HEK293 (cell line): ENCODE measurements at regions of chr12 and their contacts with region 1.

Region 1: DNA sequence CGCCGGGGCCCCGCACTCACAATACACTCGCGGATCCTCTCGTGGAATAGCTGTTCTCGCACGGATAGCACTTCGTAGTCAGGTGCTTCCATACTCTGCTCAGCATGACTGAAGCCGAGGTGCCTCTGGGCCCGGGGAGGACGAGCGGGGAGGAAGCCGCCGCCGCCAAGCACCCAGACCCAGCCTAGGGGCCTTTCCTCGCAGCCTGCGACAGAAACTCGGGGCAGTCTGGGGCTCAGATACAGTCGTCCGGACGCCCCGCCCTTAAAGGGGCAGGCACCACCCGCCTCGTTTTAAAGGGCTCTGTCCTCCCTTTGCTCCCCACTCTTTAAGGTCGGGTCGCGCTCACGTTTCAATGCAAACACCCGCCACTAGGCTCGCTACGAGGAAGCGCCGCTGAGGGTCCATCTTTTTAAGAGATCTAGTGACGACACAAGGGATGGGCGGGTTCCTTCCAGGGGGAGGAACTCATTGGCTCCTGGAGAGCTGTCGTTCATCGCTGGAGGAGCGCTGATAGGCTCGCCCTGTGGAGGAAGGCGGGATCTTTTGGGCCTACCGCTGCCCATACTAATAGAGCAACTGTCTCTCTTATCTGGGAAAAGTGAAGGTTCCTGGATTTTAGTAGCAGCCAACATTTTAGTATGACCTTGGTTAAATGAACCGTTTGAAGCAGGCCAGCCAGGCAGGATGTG is at the start of gene LMBR1L:
- H3K4me3 ChIP-seq: peak within 1 kb of the TSS; percentile 98
- H3K27ac ChIP-seq: peak within 1 kb of the TSS; percentile 84
- H3K4me1 ChIP-seq: peaks cover 10% of the 10 kb centered on the region
- CTCF ChIP-seq: peak; percentile 65; the same call in 1 of the 2 replicates

Region 2: DNA sequence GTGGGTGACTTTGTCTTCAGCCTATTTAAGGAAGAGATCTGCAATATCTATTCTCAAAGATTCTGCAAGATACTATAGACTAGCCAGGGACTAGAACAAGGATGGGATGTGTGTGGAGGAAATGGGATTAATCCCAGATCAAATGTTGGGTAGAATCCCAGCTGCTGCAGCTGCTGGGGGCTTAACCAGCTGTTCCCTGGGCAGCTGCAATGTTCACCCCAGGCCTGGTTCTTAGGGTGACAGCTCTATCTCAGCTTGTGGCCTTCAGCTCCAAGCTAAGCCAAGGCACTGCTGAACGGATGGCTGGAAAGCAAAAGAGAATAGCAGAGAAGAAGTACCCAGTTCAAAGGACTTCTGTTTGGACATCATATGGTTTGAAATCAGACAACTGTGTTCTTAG is 30.8 kb before region 1 on chr12:
- CTCF ChIA-PET with region 1: no interaction called
- POLR2A ChIA-PET with region 1: interaction called, 13 read pairs
- H3K4me3 ChIP-seq: no peak overlapping the region
- H3K27ac ChIP-seq: no peak overlapping the region
- H3K4me1 ChIP-seq: no peaks in the 10 kb centered on the region
- CTCF ChIP-seq: no peak

Region 3: GRCh38 chr12:49121047-49121696 is 10.6 kb after region 1 on chr12:
- CTCF ChIA-PET with region 1: interaction called, 29 read pairs
- POLR2A ChIA-PET with region 1: interaction called, 9 read pairs
- H3K4me3 ChIP-seq: no peak overlapping the region
- H3K27ac ChIP-seq: no peak overlapping the region
- H3K4me1 ChIP-seq: no peaks in the 10 kb centered on the region
- CTCF ChIP-seq: peak; percentile 51; the same call in 1 of the 2 replicates

Region 4: DNA sequence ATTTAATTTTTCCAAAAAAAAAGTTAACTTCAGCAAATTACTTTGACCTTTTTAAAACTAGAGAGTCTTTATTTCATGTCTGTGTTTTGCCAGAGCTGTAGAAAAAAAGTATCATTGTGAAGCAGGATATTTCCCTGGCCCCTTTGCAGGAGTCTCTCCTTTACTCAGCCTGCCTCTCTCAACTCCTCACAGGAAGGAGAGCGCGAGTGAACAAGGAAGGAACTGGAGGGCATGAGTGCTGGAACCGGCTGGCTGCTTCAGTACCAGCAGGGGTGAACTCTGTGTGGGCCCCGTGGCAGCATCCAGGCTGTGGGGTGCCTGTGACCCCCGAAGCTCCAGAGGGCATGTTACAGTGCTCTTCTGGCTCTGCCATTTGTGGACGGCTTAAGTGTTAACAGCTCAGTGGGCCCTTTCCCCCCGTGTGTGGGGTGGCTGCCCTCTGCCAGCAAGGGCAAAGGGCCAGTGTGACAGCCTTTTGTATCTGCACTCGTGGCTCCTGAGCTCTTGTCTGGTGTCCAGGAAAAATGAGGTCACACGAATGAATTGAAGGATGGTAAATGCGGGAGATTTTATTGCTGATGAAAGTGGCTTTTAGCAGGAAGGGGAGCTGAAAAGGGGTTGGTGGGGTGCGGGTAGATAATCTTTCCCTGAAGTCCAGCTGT is 351.6 kb after region 1 on chr12:
- CTCF ChIA-PET with region 1: no interaction called
- POLR2A ChIA-PET with region 1: no interaction called
- H3K4me3 ChIP-seq: no peak overlapping the region
- H3K27ac ChIP-seq: no peak overlapping the region
- H3K4me1 ChIP-seq: no peaks in the 10 kb centered on the region
- CTCF ChIP-seq: no peak